ENCODE measurements at regions of chr12 and their contacts with region 1.

Region 1: DNA sequence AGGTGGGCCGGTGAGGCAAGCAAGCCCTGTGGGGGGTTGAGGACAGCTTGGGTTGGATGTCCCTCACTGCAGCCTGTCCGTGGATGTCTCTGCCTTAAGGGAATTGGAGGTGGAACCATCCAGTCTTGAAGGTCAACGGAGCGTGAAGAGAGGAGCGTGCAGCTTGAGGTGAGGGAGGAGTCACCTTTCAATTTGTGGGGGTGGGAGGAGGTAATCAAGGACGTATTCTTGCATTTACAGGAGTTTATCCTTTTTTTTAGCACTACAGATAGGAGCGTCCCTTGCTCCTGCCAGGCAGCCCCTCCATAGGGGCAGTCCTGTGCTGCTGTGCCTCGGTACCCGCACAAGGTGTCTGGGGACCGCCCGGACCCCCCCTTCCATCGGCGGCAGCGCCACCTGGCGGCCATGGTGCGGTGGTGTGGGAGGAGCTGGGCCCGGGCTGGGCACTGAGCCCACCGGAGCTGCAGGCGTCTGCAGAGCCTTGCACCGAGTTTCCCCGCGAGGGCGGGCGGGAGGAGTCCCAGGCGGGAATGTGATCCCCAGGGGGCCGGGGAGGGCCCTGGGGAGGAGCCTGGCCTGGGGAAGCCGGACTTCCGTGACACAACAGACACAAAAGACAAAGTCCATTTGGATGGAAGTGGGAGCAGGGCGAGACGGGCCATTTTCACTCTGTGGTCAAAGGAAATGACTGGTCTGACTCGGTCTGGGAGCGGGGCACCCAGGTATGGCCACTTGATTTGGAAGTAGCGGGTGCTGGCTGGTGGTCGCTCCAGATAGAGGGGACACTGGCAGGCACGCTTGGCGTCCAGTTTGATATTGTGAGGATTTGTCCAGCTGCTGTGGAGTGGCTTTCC is 923 bp downstream of the DNAJC22 start:
- DNase-seq: peak; percentile 90
- CTCF ChIP-seq: peak; percentile 95

Region 2: GRCh38 chr12:49019443-49020324 is 327.9 kb before region 1 on chr12:
- CTCF ChIA-PET with region 1: no interaction called
- POLR2A ChIA-PET with region 1: no interaction called
- DNase-seq: peak; percentile 70
- CTCF ChIP-seq: peak; percentile 42

Region 3: GRCh38 chr12:49154221-49154620 is 193.4 kb before region 1 on chr12:
- CTCF ChIA-PET with region 1: no interaction called
- POLR2A ChIA-PET with region 1: no interaction called
- DNase-seq: no peak
- CTCF ChIP-seq: no peak

Region 4: DNA sequence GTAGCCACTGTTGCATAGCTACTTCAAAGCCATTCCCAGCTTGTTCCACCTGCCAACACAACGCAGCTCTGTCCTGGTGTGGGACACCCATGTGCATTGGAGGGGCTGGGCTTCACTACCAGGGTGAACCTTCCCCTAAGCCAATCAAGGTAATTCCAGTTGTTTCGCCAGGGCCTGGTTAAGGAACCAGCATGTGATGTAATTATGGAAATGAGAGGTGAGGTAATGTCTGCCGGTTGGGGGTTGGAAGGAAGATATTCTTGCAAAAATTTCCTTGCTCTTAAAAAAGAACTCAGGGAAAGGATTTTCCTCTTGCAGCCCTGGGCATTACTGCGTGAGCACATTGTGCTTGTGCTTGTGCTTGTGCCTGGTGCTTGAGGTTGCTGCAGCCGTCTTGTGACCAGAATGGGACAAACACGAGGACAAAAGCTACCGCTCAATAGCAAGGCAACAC is 67.9 kb before region 1 on chr12:
- CTCF ChIA-PET with region 1: interaction called, 239 read pairs
- POLR2A ChIA-PET with region 1: no interaction called
- DNase-seq: no peak
- CTCF ChIP-seq: no peak

Region 5: DNA sequence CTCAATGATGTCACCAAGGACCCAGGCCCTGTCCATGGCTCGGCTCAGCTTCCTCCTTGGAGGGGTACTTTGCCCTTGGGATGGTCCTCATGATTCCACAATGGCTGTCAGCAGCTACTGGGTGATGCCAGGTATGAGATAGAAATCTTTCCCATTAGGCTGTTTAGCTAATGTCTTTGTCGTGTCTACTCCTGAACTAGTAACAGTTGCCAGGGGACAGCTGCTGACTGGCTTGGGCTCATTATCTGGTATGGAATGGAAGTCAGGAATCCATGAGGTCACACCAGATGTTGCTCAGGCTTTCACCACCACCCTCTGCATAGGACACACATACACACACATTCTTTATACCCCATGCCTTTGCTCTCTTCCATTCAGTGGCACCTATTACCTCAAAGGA is 43.5 kb before region 1 on chr12:
- CTCF ChIA-PET with region 1: interaction called, 174 read pairs
- POLR2A ChIA-PET with region 1: no interaction called
- DNase-seq: no peak
- CTCF ChIP-seq: no peak

Region 6: GRCh38 chr12:49322708-49323523 is 24.7 kb before region 1 on chr12 and contains the start of gene TROAP:
- CTCF ChIA-PET with region 1: interaction called, 35 read pairs
- POLR2A ChIA-PET with region 1: interaction called, 5 read pairs
- DNase-seq: peak; percentile 99
- CTCF ChIP-seq: no peak

Region 7: GRCh38 chr12:49331380-49332222 is 16.0 kb before region 1 on chr12:
- CTCF ChIA-PET with region 1: interaction called, 109 read pairs
- POLR2A ChIA-PET with region 1: interaction called, 3 read pairs
- DNase-seq: peak; percentile 16
- CTCF ChIP-seq: peak; percentile 70

Region 8: GRCh38 chr12:49336645-49337584 is 10.7 kb before region 1 on chr12 and contains the start of gene C1QL4:
- CTCF ChIA-PET with region 1: interaction called, 109 read pairs
- POLR2A ChIA-PET with region 1: interaction called, 3 read pairs
- DNase-seq: peak; percentile 89
- CTCF ChIP-seq: peak; percentile 88

Region 9: GRCh38 chr12:49538510-49539403 is 191.1 kb after region 1 on chr12 and contains the start of gene KCNH3:
- CTCF ChIA-PET with region 1: interaction called, 10 read pairs
- POLR2A ChIA-PET with region 1: interaction called, 3 read pairs
- DNase-seq: peak; percentile 94
- CTCF ChIP-seq: no peak

Measured in GM10248 (cell line).